H1 (cell line): ENCODE measurements at regions of chr1 and their contacts with region 1.

Region 1: GRCh38 chr1:63316984-63317816 is 5.2 kb upstream of the FOXD3 start:
- DNase-seq: peak in 1 of 2 experiments; percentile 93
- H3K4me3 ChIP-seq: peak overlapping the region; percentile 26 to 80 (median 32)
- H3K27ac ChIP-seq: no peak overlapping the region
- H3K4me1 ChIP-seq: peaks cover 4 to 22% (median 12%) of the 10 kb centered on the region in 4 experiments
- H3K27me3 ChIP-seq: peaks cover 3 to 37% (median 21%) of the 10 kb centered on the region in 4 experiments; a peak in 6 of 7 replicates
- CTCF ChIP-seq: peak; percentile 75 to 87 (median 84)
- EP300 ChIP-seq: no peak
- POLR2A ChIP-seq: peak in 1 of 2 experiments; percentile 25; a peak in 2 of 3 replicates
- RAD21 ChIP-seq: peak; percentile 57 to 75

Region 2: GRCh38 chr1:63189677-63190076 is 127.5 kb before region 1 on chr1:
- CTCF ChIA-PET with region 1: interaction called, 14 read pairs
- POLR2A ChIA-PET with region 1: no interaction called
- DNase-seq: peak in 1 of 2 experiments; percentile 70
- H3K4me3 ChIP-seq: peak overlapping the region in 1 of 4 experiments; percentile 23; a peak in 1 of 8 replicates
- H3K27ac ChIP-seq: no peak overlapping the region
- H3K4me1 ChIP-seq: peaks cover 2 to 21% (median 10%) of the 10 kb centered on the region in 4 experiments; a peak in 5 of 7 replicates
- H3K27me3 ChIP-seq: peaks cover 0 to 2% (median 0%) of the 10 kb centered on the region in 4 experiments; a peak in 2 of 7 replicates
- CTCF ChIP-seq: peak in 2 of 3 experiments; percentile 58 to 71; a peak in 3 of 4 replicates
- EP300 ChIP-seq: no peak
- POLR2A ChIP-seq: no peak
- RAD21 ChIP-seq: peak; percentile 54 to 70

Region 3: DNA sequence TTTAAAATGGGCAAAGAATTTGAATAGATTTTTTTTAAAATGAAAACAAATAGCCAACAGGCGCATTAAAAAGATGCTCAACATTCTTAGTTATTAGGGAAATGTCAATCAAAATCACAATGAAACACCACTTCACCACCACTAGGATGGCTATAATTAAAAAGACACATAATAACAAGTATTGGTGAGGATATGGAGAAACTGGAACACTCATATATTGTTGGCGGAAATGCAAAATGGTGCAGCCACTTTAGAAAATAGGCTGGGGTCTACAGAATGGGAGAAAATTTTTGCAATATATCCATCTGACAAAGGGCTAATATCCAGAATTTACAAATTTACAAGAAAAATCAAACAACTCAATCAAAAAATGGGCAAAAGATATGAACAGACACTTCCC is 102.6 kb before region 1 on chr1:
- CTCF ChIA-PET with region 1: no interaction called
- POLR2A ChIA-PET with region 1: no interaction called
- DNase-seq: no peak
- H3K4me3 ChIP-seq: no peak overlapping the region
- H3K27ac ChIP-seq: no peak overlapping the region
- H3K4me1 ChIP-seq: no peaks in the 10 kb centered on the region; a peak in 1 of 7 replicates
- H3K27me3 ChIP-seq: no peaks in the 10 kb centered on the region
- CTCF ChIP-seq: no peak
- EP300 ChIP-seq: no peak
- POLR2A ChIP-seq: no peak
- RAD21 ChIP-seq: no peak

Region 4: DNA sequence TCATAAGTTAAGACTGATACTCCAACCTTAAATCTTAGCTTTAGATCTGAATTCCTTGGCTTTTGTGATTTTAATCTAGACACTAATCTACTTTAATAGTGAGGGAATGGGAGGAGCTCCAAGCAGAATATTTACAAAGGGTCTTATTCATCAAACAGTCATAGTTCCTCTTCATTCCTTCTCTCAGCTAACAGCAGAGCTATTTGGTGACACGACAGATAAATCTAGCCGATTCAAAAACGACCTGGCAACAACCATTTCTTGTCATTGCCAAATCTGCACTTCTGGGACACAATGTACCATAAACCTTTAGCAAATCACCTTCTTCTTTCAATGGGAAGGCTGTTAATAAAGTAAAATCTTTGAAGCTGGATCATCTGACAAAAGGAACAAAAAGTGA is 47.6 kb before region 1 on chr1:
- CTCF ChIA-PET with region 1: no interaction called
- POLR2A ChIA-PET with region 1: no interaction called
- DNase-seq: no peak
- H3K4me3 ChIP-seq: no peak overlapping the region
- H3K27ac ChIP-seq: no peak overlapping the region
- H3K4me1 ChIP-seq: no peaks in the 10 kb centered on the region
- H3K27me3 ChIP-seq: no peaks in the 10 kb centered on the region
- CTCF ChIP-seq: no peak
- EP300 ChIP-seq: no peak
- POLR2A ChIP-seq: no peak
- RAD21 ChIP-seq: no peak

Region 5: GRCh38 chr1:63294803-63295594 is 22.2 kb before region 1 on chr1:
- CTCF ChIA-PET with region 1: interaction called, 16 read pairs
- POLR2A ChIA-PET with region 1: no interaction called
- DNase-seq: peak; percentile 48 to 66
- H3K4me3 ChIP-seq: peak overlapping the region in 1 of 4 experiments; percentile 14; a peak in 2 of 8 replicates
- H3K27ac ChIP-seq: peak overlapping the region; percentile 61
- H3K4me1 ChIP-seq: peaks cover 0 to 13% (median 10%) of the 10 kb centered on the region in 4 experiments; a peak in 6 of 7 replicates
- H3K27me3 ChIP-seq: no peaks in the 10 kb centered on the region
- CTCF ChIP-seq: no peak
- EP300 ChIP-seq: peak in 1 of 2 experiments; percentile 35; a peak in 1 of 3 replicates
- POLR2A ChIP-seq: peak in 1 of 2 experiments; percentile 51; a peak in 2 of 3 replicates
- RAD21 ChIP-seq: no peak

Region 6: GRCh38 chr1:63305043-63305442 is 12.2 kb before region 1 on chr1:
- CTCF ChIA-PET with region 1: interaction called, 16 read pairs
- POLR2A ChIA-PET with region 1: interaction called, 6 read pairs
- DNase-seq: no peak
- H3K4me3 ChIP-seq: peak overlapping the region in 1 of 4 experiments; percentile 34; a peak in 1 of 8 replicates
- H3K27ac ChIP-seq: no peak overlapping the region
- H3K4me1 ChIP-seq: peaks cover 0 to 12% (median 3%) of the 10 kb centered on the region in 4 experiments; a peak in 5 of 7 replicates
- H3K27me3 ChIP-seq: no peaks in the 10 kb centered on the region; a peak in 1 of 7 replicates
- CTCF ChIP-seq: no peak
- EP300 ChIP-seq: no peak
- POLR2A ChIP-seq: no peak
- RAD21 ChIP-seq: no peak